Calu3 (cell line): ENCODE measurements at regions of chr3 and their contacts with region 1.

Region 1: DNA sequence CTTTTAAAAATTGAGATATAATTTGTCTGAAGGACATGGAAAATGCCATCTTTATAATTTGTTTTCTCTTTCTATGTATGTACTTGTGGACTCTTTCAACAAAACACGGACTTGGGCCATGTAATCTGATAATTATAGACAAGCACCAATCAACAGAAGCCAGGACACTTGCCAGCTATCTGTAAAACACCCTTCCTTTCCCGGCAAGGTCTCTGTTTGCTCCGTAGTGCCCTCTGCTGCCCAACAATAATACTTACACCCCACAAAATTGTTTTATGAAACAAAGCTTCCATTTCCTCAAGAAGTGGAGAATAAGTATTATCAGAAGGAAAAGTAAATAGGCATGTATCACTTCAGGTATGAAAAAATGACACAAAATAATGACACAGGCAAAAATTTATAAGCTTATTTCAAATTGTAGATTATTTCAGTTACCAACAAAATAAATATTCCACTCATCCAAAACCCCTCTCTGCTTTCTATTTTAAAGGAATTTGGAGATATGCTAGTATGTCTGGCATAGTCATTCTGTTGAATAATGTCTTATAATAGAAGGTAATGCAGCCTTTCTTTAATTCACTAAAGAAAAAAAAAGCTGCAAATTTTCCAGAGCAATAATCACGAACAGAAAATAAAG is 32.8 kb downstream of the MYH15 start:
- DNase-seq: peak; percentile 58
- H3K4me3 Mint-ChIP-seq: no peak overlapping the region
- H3K27ac Mint-ChIP-seq: no peak overlapping the region
- H3K4me1 Mint-ChIP-seq: peaks cover 2% of the 10 kb centered on the region
- H3K27me3 Mint-ChIP-seq: no peaks in the 10 kb centered on the region
- CTCF ChIP-seq: peak; percentile 40

Region 2: DNA sequence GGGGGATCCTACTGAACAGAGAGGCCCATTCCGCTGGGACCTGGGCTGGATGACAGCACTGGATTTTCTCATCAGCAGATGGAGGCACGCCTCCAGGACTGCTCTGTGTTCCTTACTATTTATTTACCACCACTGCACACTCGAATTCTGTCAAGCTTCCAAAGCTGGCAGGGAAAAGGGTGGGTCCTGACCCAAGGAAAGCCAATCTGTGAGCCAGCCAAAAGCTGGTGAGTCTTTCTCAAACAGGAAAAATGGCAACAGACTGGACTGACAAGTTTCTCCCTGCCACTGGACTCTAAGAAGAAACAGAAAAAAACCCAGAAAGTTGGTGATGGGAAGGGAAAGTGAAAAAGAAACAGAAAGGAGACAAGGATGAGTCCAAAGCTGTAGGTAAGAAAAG is 424.6 kb before region 1 on chr3:
- CTCF ChIA-PET with region 1: interaction called, 4 read pairs
- intact Hi-C with region 1: loop called (anchors 10 kb)
- DNase-seq: peak; percentile 46
- H3K4me3 Mint-ChIP-seq: no peak overlapping the region
- H3K27ac Mint-ChIP-seq: peak overlapping the region; percentile 1
- H3K4me1 Mint-ChIP-seq: peaks cover 14% of the 10 kb centered on the region
- H3K27me3 Mint-ChIP-seq: no peaks in the 10 kb centered on the region
- CTCF ChIP-seq: no peak

Region 3: DNA sequence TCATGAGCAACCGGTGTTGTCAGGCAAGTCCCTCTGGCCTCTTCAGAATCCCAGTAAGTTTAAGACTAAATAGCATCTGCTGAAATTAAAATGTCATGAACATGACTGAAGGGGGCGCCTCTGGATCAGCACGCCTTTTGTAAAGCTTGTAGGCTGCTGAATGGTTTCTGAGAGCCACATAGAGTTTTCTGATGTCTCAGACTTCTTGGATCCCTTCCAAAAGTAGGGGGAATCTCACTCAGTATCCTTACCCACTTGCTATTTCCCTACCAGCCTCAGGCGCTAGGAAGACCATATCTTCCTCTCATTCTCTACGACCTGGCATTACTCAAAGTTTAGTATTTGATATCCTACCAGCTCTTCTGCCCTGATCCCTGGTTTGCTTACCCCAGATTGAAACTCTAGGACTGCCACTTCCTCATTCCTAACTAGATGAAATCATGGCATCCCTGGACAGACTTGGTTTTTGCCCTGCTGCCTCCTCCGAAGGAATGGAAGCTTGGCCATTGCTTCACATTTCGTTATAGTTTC is 324.1 kb before region 1 on chr3:
- CTCF ChIA-PET with region 1: interaction called, 5 read pairs
- intact Hi-C with region 1: loop called (anchors 1 kb)
- DNase-seq: peak; percentile 50
- H3K4me3 Mint-ChIP-seq: no peak overlapping the region
- H3K27ac Mint-ChIP-seq: peak overlapping the region; percentile 86
- H3K4me1 Mint-ChIP-seq: peaks cover 28% of the 10 kb centered on the region
- H3K27me3 Mint-ChIP-seq: no peaks in the 10 kb centered on the region
- CTCF ChIP-seq: no peak

Region 4: DNA sequence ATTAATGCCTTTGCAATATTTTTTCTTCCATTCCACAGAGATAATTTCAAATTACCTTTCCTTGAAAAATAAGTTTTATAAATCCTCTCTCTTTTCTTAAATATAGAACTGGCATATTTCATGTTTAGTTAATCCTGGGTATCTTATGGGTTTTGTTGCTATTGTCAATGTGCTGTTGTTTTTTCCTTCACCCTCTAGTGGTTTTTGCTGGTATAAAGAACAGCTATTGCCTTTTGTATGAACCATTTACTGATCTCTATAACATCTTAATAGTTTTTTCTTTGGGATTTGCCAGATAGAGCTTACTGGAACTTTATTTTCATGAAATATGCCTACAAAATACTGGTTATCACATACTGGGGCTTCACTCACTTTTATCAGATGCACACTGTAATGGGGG is 1219.3 kb after region 1 on chr3:
- CTCF ChIA-PET with region 1: no interaction called
- intact Hi-C with region 1: no loop called
- DNase-seq: no peak
- H3K4me3 Mint-ChIP-seq: no peak overlapping the region
- H3K27ac Mint-ChIP-seq: no peak overlapping the region
- H3K4me1 Mint-ChIP-seq: peaks cover 15% of the 10 kb centered on the region
- H3K27me3 Mint-ChIP-seq: no peaks in the 10 kb centered on the region
- CTCF ChIP-seq: no peak